Mammary epithelial cell (primary cell): ENCODE measurements at regions of chr2 and their contacts with region 1.

Region 1: GRCh38 chr2:98559581-98559980 is 48.7 kb downstream of the COA5 start:
- DNase-seq: no peak
- H3K4me3 ChIP-seq: no peak overlapping the region
- H3K27ac ChIP-seq: no peak overlapping the region
- H3K4me1 ChIP-seq: no peaks in the 10 kb centered on the region
- H3K27me3 ChIP-seq: no peaks in the 10 kb centered on the region
- CTCF ChIP-seq: no peak

Region 2: GRCh38 chr2:97950329-97951154 is 609.0 kb before region 1 on chr2:
- CTCF ChIA-PET with region 1: no interaction called
- dilution Hi-C with region 1: no loop called
- in situ Hi-C with region 1: no loop called
- intact Hi-C with region 1: no loop called
- DNase-seq: peak; percentile 71
- H3K4me3 ChIP-seq: no peak overlapping the region
- H3K27ac ChIP-seq: peak overlapping the region; percentile 42
- H3K4me1 ChIP-seq: peaks cover 23% of the 10 kb centered on the region
- H3K27me3 ChIP-seq: no peaks in the 10 kb centered on the region
- CTCF ChIP-seq: no peak

Region 3: GRCh38 chr2:98541906-98542305 is 17.7 kb before region 1 on chr2:
- CTCF ChIA-PET with region 1: no interaction called
- dilution Hi-C with region 1: no loop called
- in situ Hi-C with region 1: no loop called
- intact Hi-C with region 1: loop called (anchors 2 kb)
- DNase-seq: peak; percentile 27
- H3K4me3 ChIP-seq: no peak overlapping the region
- H3K27ac ChIP-seq: no peak overlapping the region
- H3K4me1 ChIP-seq: no peaks in the 10 kb centered on the region
- H3K27me3 ChIP-seq: no peaks in the 10 kb centered on the region
- CTCF ChIP-seq: no peak